ENCODE measurements at regions of chr12 and their contacts with region 1.

Region 1: DNA sequence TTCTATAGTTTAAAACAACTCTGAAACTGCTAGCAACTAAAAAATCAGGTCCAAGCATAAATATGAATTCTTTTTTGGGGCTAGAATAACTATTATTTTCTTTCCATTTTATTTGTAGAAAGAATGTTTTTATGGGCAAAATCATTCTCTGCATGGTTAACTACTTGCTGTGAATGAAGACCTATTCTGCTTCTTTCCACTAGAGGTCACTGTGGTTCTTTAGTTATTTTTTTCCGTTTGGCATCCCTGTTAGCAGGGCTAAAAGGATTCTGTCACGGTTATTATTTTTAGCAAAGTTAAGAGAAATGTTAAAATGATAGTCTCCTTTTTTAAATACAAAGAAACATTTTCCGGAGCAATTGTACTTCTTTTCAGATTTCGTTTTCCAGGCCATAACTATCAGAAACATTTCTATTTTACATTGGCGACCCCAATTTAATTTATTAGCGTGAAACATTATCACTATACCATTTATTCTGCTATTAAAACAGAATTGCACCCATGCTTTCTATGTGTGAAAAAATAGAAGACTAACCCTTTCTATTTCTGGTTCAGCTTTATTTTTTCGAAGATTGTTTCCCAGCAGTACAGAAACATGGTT is 404.8 kb downstream of the ATP23 start:
- DNase-seq: peak; percentile 45
- H3K4me3 Mint-ChIP-seq: no peak overlapping the region
- H3K27ac Mint-ChIP-seq: no peak overlapping the region
- H3K4me1 Mint-ChIP-seq: no peaks in the 10 kb centered on the region
- H3K27me3 Mint-ChIP-seq: no peaks in the 10 kb centered on the region
- CTCF ChIP-seq: peak; percentile 55

Region 2: DNA sequence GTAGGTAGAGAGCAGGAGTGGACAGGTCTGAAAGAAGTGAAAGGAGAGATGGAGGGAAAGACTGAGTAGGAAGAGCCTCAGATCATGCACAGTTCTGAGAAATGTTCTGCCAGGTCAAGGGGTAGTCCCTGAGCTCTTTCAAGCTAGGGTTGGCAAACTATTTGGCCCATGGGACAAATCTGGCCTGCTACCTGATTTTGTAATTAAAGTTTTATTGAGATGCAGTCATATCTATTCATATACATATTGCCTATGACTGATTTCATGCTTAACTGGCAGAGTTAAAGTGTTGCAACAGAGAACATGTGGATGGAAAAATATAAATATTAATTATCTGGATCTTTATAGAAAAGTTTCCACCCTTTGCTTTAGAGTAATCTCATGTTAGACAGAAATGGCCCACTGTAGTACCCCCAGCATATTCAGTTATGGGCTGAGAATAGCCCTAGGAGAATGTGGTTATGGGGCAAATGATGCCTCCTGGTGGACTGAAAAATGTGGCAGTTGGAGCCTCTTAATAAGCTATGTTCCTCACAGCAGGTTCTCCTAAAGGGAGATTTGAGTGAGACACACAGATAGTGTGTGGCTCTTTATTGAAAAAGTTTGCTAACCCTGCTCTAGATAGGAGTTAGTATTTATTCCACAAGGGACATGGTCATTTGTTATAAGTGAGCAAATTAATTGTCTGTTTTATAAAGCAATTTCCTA is 97.3 kb after region 1 on chr12:
- CTCF ChIA-PET with region 1: interaction called, 4 read pairs
- POLR2A ChIA-PET with region 1: no interaction called
- intact Hi-C with region 1: loop called (anchors 1 kb)
- DNase-seq: peak; percentile 58
- H3K4me3 Mint-ChIP-seq: no peak overlapping the region
- H3K27ac Mint-ChIP-seq: no peak overlapping the region
- H3K4me1 Mint-ChIP-seq: no peaks in the 10 kb centered on the region
- H3K27me3 Mint-ChIP-seq: no peaks in the 10 kb centered on the region
- CTCF ChIP-seq: peak; percentile 51

Region 3: DNA sequence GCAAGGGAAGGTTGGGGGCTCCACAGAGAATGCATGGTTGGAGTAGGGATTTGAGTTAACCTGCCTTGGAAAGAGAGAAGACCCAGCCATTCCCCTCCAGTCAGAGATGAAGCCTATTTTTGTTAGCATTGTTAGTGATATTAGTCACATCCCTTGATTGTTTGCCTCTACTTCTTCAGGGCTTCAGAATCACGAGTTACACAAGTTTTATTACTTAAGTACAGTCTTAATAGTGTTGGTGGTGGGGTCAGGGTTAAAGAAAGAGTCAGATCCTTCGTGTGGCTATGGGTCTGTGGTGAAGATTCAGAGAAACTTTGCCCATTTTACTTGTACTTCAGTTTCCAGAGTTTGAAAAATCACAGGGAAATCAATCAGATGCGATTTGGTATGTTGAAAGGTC is 211.0 kb after region 1 on chr12:
- CTCF ChIA-PET with region 1: no interaction called
- POLR2A ChIA-PET with region 1: no interaction called
- intact Hi-C with region 1: no loop called
- DNase-seq: peak; percentile 30
- H3K4me3 Mint-ChIP-seq: no peak overlapping the region
- H3K27ac Mint-ChIP-seq: no peak overlapping the region
- H3K4me1 Mint-ChIP-seq: peaks cover 5% of the 10 kb centered on the region
- H3K27me3 Mint-ChIP-seq: no peaks in the 10 kb centered on the region
- CTCF ChIP-seq: no peak

Region 4: GRCh38 chr12:58583541-58584339 is 237.6 kb after region 1 on chr12:
- CTCF ChIA-PET with region 1: no interaction called
- POLR2A ChIA-PET with region 1: no interaction called
- intact Hi-C with region 1: no loop called
- DNase-seq: peak; percentile 43
- H3K4me3 Mint-ChIP-seq: no peak overlapping the region
- H3K27ac Mint-ChIP-seq: no peak overlapping the region
- H3K4me1 Mint-ChIP-seq: peaks cover 10% of the 10 kb centered on the region
- H3K27me3 Mint-ChIP-seq: no peaks in the 10 kb centered on the region
- CTCF ChIP-seq: no peak

Region 5: DNA sequence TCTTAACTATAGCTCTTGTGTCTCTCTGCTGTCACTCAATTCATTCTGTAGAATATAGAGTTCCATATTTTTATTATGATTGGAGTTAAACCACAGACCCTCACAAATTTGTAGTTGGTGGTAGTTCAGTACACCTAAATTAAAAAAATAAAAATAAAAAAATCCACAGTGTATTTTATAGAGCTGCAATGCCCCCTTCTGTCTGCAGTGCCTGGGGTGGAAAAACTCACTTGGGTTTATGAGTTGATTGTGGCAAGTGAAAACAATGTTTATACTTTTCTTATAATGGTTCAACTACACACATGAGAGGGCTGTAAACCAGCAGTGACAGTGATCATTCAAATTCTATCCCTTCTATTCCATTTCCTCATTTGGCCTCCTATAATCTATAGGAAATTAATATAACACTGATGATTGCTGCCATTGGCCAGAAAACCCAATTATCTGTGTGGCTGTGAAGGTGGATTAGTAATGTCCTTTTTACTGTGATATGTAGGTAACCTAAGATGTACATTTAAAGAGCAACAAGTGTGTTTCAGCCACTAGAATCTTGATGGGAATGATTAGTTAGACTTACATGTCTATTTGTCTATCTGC is 741.0 kb after region 1 on chr12:
- CTCF ChIA-PET with region 1: interaction called, 5 read pairs
- POLR2A ChIA-PET with region 1: no interaction called
- intact Hi-C with region 1: loop called (anchors 1 kb)
- DNase-seq: peak; percentile 37
- H3K4me3 Mint-ChIP-seq: no peak overlapping the region
- H3K27ac Mint-ChIP-seq: no peak overlapping the region
- H3K4me1 Mint-ChIP-seq: peaks cover 33% of the 10 kb centered on the region
- H3K27me3 Mint-ChIP-seq: no peaks in the 10 kb centered on the region
- CTCF ChIP-seq: peak; percentile 79

Region 6: DNA sequence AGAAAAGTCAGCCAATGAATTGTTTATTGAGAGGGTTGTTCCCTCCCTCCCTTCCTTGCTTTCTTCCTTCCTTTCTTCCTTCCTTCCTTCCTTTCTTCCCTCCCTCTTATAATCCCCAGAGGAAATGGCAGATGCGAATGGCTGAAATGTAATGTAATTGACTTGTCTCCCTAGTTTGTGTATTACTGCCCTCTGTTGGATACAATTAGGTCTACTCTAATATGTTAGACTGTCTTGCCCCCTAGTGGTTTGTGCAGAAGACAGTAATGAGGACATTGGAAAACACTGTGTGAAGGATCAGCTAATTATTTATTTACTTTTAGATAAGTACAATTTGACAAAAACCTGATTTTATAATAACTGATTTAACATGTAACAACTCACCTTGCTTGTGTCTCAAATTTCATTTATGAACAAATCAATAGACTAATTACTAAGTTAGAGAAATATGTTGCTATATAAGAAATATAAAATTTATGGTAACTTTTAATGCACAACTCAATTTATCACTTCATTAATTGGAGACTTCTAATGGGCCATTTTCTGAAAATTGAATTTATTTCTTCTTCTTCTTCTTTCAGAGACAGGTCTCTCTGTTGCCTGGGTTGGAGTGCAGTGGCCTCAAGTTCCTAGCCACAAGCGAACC is 804.0 kb after region 1 on chr12:
- CTCF ChIA-PET with region 1: interaction called, 8 read pairs
- POLR2A ChIA-PET with region 1: no interaction called
- intact Hi-C with region 1: loop called (anchors 1 kb)
- DNase-seq: peak; percentile 84
- H3K4me3 Mint-ChIP-seq: no peak overlapping the region
- H3K27ac Mint-ChIP-seq: no peak overlapping the region
- H3K4me1 Mint-ChIP-seq: peaks cover 11% of the 10 kb centered on the region
- H3K27me3 Mint-ChIP-seq: no peaks in the 10 kb centered on the region
- CTCF ChIP-seq: peak; percentile 91

Measured in MCF 10A (cell line).